Activated CD8-positive, alpha-beta memory T cell treated with anti-CD3 and anti-CD28 coated beads, Interleukin-2, amount 10 ng/mL, durations not matched to agents 7 days and 5 days (primary cell): ENCODE measurements at regions of chr2 and their contacts with region 1.

Region 1: GRCh38 chr2:71100195-71100964 is 29.6 kb downstream of the MCEE start:
- DNase-seq: peak; percentile 59
- ATAC-seq: no peak
- H3K4me3 Mint-ChIP-seq: no peak overlapping the region
- H3K27ac Mint-ChIP-seq: no peak overlapping the region
- H3K4me1 Mint-ChIP-seq: peaks cover 4% of the 10 kb centered on the region
- H3K27me3 Mint-ChIP-seq: peaks cover 10% of the 10 kb centered on the region

Region 2: GRCh38 chr2:71113843-71114242 is 13.5 kb after region 1 on chr2:
- CTCF ChIA-PET with region 1: interaction called, 13 read pairs
- DNase-seq: no peak
- ATAC-seq: no peak
- H3K4me3 Mint-ChIP-seq: no peak overlapping the region
- H3K27ac Mint-ChIP-seq: no peak overlapping the region
- H3K4me1 Mint-ChIP-seq: peaks cover 8% of the 10 kb centered on the region
- H3K27me3 Mint-ChIP-seq: no peaks in the 10 kb centered on the region

Region 3: DNA sequence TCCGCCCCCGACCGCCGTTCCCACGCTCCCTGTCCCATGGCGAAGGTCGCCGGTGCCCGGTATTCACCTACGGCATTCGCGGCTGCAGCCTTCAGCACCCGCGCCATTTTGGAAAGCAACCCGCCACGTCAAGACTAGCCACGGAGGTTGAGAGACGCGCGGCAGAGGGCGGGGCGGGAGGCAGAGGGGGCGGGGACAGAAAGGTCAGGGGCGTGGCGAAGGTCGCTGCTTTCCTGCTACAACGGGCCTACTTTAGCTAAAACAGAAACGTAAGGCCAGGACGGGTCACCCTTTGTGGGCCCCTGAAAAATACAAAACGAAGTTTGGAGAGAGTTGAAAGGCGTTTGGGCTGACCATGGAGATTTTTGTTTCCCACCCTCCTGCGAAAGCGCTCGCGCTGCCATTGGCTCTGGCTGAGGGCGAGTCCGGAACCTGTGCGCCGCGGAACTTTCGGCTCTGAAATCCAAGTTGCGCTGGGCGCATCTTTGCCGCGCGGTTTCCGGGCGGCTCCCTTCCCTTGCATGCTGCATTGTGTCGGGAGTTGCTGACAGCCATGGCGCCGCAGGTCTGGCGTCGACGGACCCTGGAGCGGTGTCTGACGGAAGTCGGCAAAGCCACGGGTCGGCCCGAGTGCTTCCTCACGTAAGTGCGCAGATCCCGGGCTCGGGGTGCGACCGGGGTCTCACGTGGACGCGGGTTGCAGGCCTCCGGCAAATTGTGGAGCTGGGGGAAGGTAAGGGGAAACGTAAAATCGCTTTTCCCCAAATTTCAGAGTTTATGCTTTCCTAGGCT is 29.9 kb after region 1 on chr2 and contains the starts of genes MCEE and MPHOSPH10:
- CTCF ChIA-PET with region 1: interaction called, 11 read pairs
- DNase-seq: peak; percentile 93
- ATAC-seq: peak; percentile 92
- H3K4me3 Mint-ChIP-seq: no peak within 1 kb of the TSS
- H3K27ac Mint-ChIP-seq: no peak within 1 kb of the TSS
- H3K4me1 Mint-ChIP-seq: peaks cover 16% of the 10 kb centered on the region
- H3K27me3 Mint-ChIP-seq: no peaks in the 10 kb centered on the region
- total RNA-seq, gene MCEE: 12.6 to 16.3 TPM
- total RNA-seq, gene MPHOSPH10: 24.2 to 40.8 TPM

Region 4: GRCh38 chr2:71157124-71157793 is 56.9 kb after region 1 on chr2:
- CTCF ChIA-PET with region 1: interaction called, 10 read pairs
- DNase-seq: peak; percentile 65
- ATAC-seq: peak; percentile 75
- H3K4me3 Mint-ChIP-seq: peak overlapping the region; percentile 27
- H3K27ac Mint-ChIP-seq: no peak overlapping the region
- H3K4me1 Mint-ChIP-seq: peaks cover 4% of the 10 kb centered on the region
- H3K27me3 Mint-ChIP-seq: peaks cover 2% of the 10 kb centered on the region